ENCODE measurements at regions of chr4 and their contacts with region 1.

Region 1: DNA sequence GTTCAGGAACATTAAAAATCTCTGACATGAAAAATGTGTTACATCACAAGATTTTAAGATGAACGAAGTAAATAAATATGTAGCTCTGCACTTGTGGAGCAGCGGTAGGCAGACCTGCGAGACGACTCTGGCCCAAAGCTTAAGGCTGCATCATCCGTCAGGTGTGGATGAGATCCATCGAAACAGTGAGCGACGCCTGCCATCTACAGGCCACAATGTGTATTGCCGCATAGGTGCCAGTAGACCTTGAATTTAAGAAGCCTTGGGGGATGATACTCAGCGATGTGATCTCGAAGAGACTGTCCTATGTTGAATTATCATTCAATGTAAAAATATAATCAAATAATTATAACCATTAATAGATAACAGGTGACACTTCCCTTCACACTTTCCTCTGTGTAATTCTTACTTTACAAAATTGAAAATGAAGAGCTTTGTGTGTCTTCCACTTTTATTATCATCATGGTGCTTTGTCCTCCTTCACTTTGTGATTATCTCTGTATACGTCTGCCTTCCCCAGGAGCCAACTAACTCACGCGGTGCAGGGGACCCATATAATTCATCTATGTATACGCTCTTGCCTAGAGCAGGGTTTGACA is 851.0 kb downstream of the RAB28 start:
- DNase-seq: peak; percentile 48
- ATAC-seq: peak; percentile 80
- H3K4me3 ChIP-seq: no peak overlapping the region
- H3K27ac ChIP-seq: no peak overlapping the region
- H3K4me1 ChIP-seq: no peaks in the 10 kb centered on the region
- H3K27me3 ChIP-seq: no peaks in the 10 kb centered on the region
- CTCF ChIP-seq: peak; percentile 64
- POLR2A ChIP-seq: no peak
- RAD21 ChIP-seq: peak; percentile 73

Region 2: GRCh38 chr4:11765849-11766453 is 867.2 kb before region 1 on chr4:
- CTCF ChIA-PET with region 1: no interaction called
- POLR2A ChIA-PET with region 1: no interaction called
- dilution Hi-C with region 1: no loop called
- in situ Hi-C with region 1: no loop called
- intact Hi-C with region 1: loop called (anchors 10 kb)
- DNase-seq: peak; percentile 37
- ATAC-seq: peak; percentile 75
- H3K4me3 ChIP-seq: no peak overlapping the region
- H3K27ac ChIP-seq: no peak overlapping the region
- H3K4me1 ChIP-seq: no peaks in the 10 kb centered on the region
- H3K27me3 ChIP-seq: no peaks in the 10 kb centered on the region
- CTCF ChIP-seq: peak; percentile 51
- POLR2A ChIP-seq: no peak
- RAD21 ChIP-seq: peak; percentile 43

Measured in IMR-90 (cell line).